KBM-7 (cell line): ENCODE measurements at regions of chr11 and their contacts with region 1.

Region 1: GRCh38 chr11:128290106-128290840 is 297.1 kb downstream of the ETS1 start:
- DNase-seq: peak; percentile 66

Region 2: DNA sequence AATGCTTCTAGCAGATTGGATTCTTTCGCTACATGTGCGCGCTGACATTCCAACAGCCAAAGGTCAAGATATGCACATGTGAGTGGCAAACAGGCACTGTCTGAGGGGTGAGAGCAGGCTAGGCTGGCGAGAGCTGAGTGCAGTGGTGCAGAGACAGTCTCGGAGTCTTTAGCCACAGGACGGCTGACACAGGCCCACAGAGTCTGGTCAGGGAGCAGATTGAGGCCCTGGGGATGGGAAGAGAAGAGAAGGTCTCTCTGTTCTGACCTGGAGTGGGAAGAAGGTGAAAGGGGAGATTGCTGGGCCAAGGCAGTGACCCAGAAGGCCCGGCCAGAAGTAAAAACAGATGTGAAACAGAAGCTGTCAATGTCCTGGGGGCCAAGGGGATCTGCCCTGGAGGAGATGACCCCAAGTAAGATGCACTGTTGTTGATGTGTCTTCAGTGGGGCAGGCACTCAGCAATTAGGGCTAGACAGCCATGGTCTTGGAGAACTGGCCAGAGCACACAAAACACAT is 99.2 kb after region 1 on chr11:
- in situ Hi-C with region 1: no loop called
- DNase-seq: no peak

Region 3: DNA sequence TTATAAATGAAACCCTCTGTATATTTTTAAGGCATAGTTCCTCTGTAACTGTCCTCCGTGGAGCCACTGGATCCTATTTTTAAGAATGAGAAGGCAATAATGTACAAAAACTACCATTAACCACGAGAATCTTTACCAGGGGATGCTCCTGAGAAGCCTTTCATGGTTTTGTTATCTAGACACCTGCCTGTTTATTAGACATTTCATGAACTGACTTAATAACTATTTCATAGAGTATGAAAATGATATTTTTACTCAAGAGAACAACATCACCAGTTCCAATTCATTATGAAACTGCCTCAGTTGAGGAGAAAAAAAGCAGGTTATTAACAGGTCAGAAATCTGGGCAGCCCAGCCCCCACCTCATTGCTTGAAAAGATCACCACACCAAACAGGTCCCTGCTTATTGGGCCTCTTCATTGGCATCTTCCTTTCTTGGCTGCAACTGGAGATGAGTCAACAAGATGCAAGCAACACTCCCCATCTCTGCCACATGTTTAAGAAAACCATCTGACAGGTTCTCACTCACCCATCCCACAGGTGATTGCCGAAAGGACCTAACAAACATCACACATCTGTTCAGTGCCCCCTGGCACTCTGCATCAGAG is 269.3 kb after region 1 on chr11:
- in situ Hi-C with region 1: no loop called
- DNase-seq: no peak

Region 4: DNA sequence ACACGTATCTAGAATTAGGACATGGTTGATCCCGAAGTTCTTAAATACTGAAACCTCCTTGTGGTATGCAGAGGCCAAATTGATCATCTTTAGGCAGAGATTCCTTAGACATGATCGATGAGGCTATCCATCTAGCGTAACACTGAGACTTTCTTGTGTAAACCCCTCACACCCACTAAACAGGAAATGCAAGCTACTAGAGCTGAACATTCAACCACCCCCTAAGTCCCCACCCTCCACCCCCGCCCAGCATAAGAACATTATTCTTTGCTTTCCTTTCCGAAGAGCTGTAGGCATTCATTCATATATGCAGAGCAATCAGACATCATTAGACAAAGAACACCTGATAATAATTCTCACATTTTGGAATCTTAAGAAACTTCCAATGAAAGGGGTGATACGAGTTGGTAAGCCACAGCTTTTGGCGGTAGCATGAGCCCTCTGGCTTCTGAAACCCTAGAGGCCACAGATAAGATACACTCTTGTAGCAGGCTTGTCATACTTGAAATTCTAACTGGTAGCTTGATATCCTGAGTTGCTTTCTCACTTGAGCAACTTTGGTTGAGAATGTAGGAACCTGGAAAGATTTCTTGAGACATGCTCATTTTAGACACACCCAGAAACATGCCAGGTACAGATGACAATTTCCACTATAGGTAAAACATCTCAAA is 445.8 kb after region 1 on chr11:
- in situ Hi-C with region 1: no loop called
- DNase-seq: no peak

Region 5: GRCh38 chr11:128831174-128832120 is 541.2 kb after region 1 on chr11:
- in situ Hi-C with region 1: loop called (anchors 25 kb)
- DNase-seq: peak; percentile 90